Dendritic cell treated with granulocyte-macrophage colony-stimulating factor and Interleukin-4, amounts not matched to agents 40 ng/mL and 50 ng/mL, for 4 days (primary cell): ENCODE measurements at regions of chr5 and their contacts with region 1.

Region 1: DNA sequence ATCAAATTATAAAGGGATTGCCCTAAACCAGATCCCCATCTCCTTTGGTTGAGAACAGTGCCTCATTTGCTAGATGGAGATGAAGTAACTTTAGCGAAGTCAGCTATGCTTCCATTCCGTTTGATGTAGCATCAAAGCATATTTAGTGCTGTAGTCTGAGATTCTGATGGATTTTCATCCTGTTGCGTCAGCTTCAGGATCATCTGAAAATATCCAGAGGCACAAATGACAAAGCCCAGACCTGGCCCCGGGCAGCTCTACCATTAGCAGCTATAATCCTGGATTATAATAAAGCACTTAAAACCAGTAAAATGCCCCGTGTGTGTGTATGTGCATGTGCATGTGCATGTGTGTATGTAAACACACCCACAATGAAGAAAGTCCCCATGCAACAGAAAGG is 44.7 kb downstream of the ERAP1 start:
- H3K4me3 Mint-ChIP-seq: no peak overlapping the region
- H3K27ac Mint-ChIP-seq: no peak overlapping the region
- H3K4me1 Mint-ChIP-seq: no peaks in the 10 kb centered on the region
- H3K27me3 Mint-ChIP-seq: no peaks in the 10 kb centered on the region

Region 2: GRCh38 chr5:95508550-95508949 is 1254.5 kb before region 1 on chr5:
- intact Hi-C with region 1: loop called (anchors 10 kb)
- H3K4me3 Mint-ChIP-seq: no peak overlapping the region
- H3K27ac Mint-ChIP-seq: no peak overlapping the region
- H3K4me1 Mint-ChIP-seq: no peaks in the 10 kb centered on the region
- H3K27me3 Mint-ChIP-seq: no peaks in the 10 kb centered on the region

Region 3: DNA sequence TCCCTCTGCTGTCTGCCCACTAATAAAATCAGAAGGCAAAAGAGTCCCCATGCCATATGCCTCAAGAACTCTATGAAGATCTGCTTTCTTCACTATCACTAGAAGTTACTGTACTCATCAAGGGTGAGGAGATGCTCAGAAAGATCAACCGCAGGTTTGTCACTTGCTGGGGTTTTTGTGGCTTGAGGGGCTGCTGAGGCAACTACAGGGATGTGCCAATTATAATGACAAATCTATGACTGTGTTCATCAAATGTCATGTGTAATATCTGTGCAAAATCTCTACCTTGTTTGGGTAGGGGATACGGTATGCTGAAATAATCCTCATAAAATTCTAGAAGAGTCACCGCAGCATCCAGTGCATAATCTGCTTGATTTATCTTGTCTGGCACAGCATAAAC is 31.7 kb after region 1 on chr5:
- intact Hi-C with region 1: loop called (anchors 5 kb)
- H3K4me3 Mint-ChIP-seq: no peak overlapping the region
- H3K27ac Mint-ChIP-seq: no peak overlapping the region
- H3K4me1 Mint-ChIP-seq: peaks cover 16% of the 10 kb centered on the region
- H3K27me3 Mint-ChIP-seq: no peaks in the 10 kb centered on the region

Region 4: GRCh38 chr5:97009212-97009898 is 246.3 kb after region 1 on chr5:
- intact Hi-C with region 1: loop called (anchors 10 kb)
- H3K4me3 Mint-ChIP-seq: peak overlapping the region; percentile 39
- H3K27ac Mint-ChIP-seq: peak overlapping the region; percentile 89
- H3K4me1 Mint-ChIP-seq: peaks cover 24% of the 10 kb centered on the region
- H3K27me3 Mint-ChIP-seq: no peaks in the 10 kb centered on the region